MCF 10A (cell line): ENCODE measurements at regions of chr1 and their contacts with region 1.

Region 1: DNA sequence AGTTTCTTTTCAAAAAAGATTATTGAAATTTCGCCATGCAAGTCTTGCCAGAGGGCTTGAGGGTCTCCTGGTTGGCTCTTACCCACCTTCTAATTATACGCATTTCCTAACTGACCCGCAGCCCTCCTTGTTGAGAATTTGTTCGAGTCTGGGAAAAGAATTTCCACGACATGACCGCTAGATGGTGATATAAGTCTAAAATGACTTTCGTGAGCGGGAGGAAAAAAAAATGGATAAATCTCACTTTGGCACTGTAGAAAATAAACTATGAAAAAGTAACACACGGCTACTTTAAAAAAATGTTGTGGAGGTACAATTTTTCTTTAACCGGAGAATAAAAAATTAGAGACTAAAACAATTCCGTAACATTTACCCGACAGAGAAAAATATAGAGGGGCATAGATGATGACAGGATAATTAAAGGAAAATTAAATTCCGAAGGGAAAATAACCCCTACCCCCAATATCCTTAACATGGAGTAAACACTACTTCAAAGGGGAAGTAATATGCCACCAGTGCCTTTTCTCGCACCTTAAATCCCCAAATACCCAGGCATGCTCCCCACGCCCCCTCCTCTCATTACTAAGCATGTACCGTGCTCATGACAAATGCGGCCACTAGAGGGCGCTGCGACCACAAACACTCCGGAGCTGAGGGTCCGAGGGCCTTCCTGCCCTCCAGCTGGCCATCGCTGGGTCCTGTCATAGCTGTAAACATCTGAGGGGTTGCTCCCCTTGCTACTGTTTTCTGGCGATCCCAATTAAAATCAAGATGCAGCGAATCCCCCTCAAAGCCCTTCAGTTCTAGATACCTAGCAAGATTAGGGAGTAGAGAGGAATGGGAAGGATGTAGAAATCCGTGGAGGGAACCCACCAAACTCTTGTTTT is 266.9 kb downstream of the ASTN1 start:
- DNase-seq: peak; percentile 70
- H3K4me3 Mint-ChIP-seq: peak overlapping the region; percentile 63
- H3K27ac Mint-ChIP-seq: no peak overlapping the region
- H3K4me1 Mint-ChIP-seq: peaks cover 10% of the 10 kb centered on the region
- H3K27me3 Mint-ChIP-seq: peaks cover 64% of the 10 kb centered on the region
- CTCF ChIP-seq: peak; percentile 99

Region 2: DNA sequence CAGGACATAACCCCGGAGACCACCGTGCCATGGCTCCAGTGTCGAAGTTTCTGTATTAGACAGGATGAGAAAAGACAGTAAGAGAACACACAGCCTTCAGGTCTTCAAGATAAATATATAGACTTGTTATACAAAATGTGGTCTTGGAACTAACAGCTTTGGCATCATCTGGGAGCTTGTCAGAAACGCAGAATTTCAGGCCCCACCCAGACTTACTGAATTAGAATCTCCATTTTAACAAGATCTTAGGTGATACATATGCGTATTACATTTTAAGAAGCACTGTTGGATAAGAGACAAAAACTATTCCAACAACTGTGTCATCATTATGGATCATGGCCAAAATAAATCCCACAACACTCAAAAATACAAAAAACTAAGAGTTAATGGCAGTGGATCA is 27.6 kb after region 1 on chr1:
- CTCF ChIA-PET with region 1: interaction called, 10 read pairs
- POLR2A ChIA-PET with region 1: no interaction called
- intact Hi-C with region 1: no loop called
- DNase-seq: no peak
- H3K4me3 Mint-ChIP-seq: no peak overlapping the region
- H3K27ac Mint-ChIP-seq: no peak overlapping the region
- H3K4me1 Mint-ChIP-seq: no peaks in the 10 kb centered on the region
- H3K27me3 Mint-ChIP-seq: peaks cover 50% of the 10 kb centered on the region
- CTCF ChIP-seq: no peak

Region 3: DNA sequence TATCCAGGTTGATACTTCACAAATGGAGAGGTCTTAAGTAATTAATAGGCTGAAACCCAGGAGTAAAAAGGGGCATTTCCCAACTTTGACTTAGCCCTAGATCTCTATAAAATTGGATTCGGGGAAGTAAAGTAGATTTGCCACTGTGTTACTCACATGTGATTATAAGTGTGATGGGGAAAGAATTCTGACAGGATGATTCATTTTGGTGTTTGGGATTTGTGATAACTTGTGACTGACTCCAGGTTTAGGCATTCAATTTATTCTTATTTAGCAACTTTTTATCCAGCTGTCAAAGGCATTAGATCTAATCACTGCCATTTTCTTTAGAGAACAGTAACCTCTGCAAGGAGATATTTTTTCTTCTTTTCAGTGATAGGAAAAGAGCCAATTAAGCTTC is 91.4 kb after region 1 on chr1:
- CTCF ChIA-PET with region 1: interaction called, 17 read pairs
- POLR2A ChIA-PET with region 1: no interaction called
- intact Hi-C with region 1: no loop called
- DNase-seq: peak; percentile 61
- H3K4me3 Mint-ChIP-seq: no peak overlapping the region
- H3K27ac Mint-ChIP-seq: peak overlapping the region; percentile 29
- H3K4me1 Mint-ChIP-seq: peaks cover 46% of the 10 kb centered on the region
- H3K27me3 Mint-ChIP-seq: no peaks in the 10 kb centered on the region
- CTCF ChIP-seq: no peak

Region 4: DNA sequence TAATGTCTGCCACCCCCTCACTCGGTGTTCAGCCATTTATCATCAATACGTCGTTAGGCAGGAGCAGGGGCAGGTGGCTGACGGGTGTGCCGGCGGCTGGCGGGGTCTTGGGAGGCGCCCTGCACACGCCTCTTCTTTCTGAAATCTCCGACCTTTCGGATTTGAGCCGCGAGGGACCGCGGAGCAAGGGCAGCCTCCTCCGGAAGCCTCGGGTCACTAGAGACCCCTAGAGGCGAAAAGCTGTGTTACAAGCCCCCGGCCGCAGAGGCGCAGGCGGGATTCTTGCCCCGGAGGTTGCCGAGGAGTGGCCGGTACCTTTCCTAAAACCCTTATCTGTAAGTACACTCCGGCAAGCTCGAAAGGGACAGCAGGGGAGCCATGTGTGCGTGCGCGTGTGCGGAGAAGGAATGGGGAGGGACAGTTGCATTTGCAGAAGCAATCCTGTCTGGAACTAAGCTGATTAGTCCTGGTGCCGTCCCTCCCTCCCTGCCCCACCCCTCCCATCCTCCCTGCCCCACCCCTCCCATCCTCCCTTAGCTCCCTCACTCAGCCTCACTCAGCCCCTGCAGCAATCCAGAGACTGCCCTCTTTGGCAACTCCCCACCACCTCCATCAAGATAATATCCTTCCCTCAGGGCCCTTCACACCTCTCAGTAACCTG is 284.2 kb after region 1 on chr1:
- CTCF ChIA-PET with region 1: interaction called, 150 read pairs
- POLR2A ChIA-PET with region 1: no interaction called
- intact Hi-C with region 1: loop called (anchors 1 kb)
- DNase-seq: peak; percentile 68
- H3K4me3 Mint-ChIP-seq: peak overlapping the region; percentile 56
- H3K27ac Mint-ChIP-seq: no peak overlapping the region
- H3K4me1 Mint-ChIP-seq: peaks cover 8% of the 10 kb centered on the region
- H3K27me3 Mint-ChIP-seq: peaks cover 70% of the 10 kb centered on the region
- CTCF ChIP-seq: peak; percentile 96

Region 5: GRCh38 chr1:177256153-177257075 is 358.8 kb after region 1 on chr1:
- CTCF ChIA-PET with region 1: interaction called, 11 read pairs
- POLR2A ChIA-PET with region 1: no interaction called
- intact Hi-C with region 1: loop called (anchors 1 kb)
- DNase-seq: peak; percentile 96
- H3K4me3 Mint-ChIP-seq: no peak overlapping the region
- H3K27ac Mint-ChIP-seq: no peak overlapping the region
- H3K4me1 Mint-ChIP-seq: peaks cover 21% of the 10 kb centered on the region
- H3K27me3 Mint-ChIP-seq: no peaks in the 10 kb centered on the region
- CTCF ChIP-seq: peak; percentile 70

Region 6: DNA sequence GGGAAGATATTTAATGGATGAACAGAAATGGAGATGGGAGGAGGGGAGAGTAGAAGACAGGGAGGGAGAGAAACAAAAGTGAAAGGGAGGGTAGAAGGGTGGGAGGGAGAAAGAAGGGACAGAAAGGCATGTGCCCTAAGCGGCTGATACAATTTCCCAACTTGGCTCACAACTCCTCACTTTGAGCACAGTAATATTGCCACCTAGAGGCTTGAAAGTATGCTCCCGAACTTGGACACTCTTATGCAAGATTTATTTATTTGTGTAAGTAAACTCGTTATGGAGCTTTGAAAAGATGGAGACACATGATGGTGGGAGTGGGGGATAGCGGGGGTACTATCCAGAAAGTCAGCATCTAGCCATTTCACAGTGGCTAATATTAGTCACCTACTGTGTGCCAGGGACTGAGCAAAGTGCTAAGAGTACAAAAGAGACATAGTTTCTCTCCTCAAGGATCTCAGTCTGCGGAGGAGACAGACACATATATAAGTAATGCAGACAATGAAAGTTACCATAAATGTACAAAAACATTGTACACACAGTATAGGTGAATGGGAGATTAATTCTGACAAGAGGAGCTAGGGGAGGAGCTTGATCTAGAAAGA is 882.6 kb after region 1 on chr1:
- CTCF ChIA-PET with region 1: interaction called, 35 read pairs
- POLR2A ChIA-PET with region 1: no interaction called
- intact Hi-C with region 1: loop called (anchors 1 kb)
- DNase-seq: peak; percentile 70
- H3K4me3 Mint-ChIP-seq: no peak overlapping the region
- H3K27ac Mint-ChIP-seq: no peak overlapping the region
- H3K4me1 Mint-ChIP-seq: no peaks in the 10 kb centered on the region
- H3K27me3 Mint-ChIP-seq: peaks cover 34% of the 10 kb centered on the region
- CTCF ChIP-seq: peak; percentile 64